Activated CD4-positive, alpha-beta T cell treated with anti-CD3 and anti-CD28 coated beads for 36 hours (primary cell): ENCODE measurements at regions of chr9 and their contacts with region 1.

Region 1: DNA sequence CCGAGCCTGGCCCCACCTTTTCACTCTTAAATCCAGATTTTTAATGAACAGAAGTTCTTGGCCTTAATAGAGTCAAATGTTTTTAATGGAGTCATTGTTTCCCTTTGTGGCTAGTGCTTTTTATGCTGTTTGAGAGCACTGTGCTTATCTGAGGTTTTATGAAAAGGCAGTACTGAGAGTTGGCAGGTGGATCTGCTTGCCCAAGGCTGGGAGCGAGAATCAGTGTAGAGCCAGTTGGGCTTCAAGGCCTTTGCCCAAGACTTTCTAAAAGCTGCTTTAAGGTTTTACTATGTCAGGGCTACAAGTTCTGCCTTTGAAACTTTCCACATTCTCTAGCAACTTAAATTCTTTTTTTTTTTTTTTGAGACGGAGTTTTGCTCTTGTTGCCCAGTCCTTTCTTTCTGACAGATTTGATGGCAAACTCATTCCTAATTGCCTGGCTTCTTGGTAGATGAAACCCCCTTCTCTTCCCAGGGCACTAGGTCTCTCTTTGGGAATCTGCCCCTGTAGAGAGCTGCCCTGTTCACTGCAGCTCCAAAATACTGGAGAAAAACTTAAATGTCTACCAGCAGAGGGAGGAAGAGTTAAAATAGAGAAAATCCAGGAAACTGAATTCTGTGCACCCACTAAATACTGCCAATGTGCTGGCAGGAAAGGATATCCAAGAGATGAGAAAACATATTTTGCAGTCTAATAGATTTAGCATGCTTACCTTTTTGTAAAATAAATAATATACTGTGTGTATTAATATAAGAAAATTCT is 36.9 kb upstream of the CDK20 start:
- DNase-seq: no peak
- ATAC-seq: no peak
- H3K4me3 Mint-ChIP-seq: no peak overlapping the region
- H3K27ac Mint-ChIP-seq: no peak overlapping the region
- H3K4me1 Mint-ChIP-seq: peaks cover 14% of the 10 kb centered on the region
- H3K27me3 Mint-ChIP-seq: peaks cover 5% of the 10 kb centered on the region

Region 2: GRCh38 chr9:87707805-87708506 is 303.2 kb before region 1 on chr9:
- CTCF ChIA-PET with region 1: no interaction called
- POLR2A ChIA-PET with region 1: no interaction called
- intact Hi-C with region 1: loop called in 1 of 2 experiments (anchors 5 kb)
- DNase-seq: peak; percentile 31
- ATAC-seq: peak; percentile 40
- H3K4me3 Mint-ChIP-seq: no peak overlapping the region
- H3K27ac Mint-ChIP-seq: no peak overlapping the region
- H3K4me1 Mint-ChIP-seq: peaks cover 44% of the 10 kb centered on the region
- H3K27me3 Mint-ChIP-seq: peaks cover 5% of the 10 kb centered on the region

Region 3: DNA sequence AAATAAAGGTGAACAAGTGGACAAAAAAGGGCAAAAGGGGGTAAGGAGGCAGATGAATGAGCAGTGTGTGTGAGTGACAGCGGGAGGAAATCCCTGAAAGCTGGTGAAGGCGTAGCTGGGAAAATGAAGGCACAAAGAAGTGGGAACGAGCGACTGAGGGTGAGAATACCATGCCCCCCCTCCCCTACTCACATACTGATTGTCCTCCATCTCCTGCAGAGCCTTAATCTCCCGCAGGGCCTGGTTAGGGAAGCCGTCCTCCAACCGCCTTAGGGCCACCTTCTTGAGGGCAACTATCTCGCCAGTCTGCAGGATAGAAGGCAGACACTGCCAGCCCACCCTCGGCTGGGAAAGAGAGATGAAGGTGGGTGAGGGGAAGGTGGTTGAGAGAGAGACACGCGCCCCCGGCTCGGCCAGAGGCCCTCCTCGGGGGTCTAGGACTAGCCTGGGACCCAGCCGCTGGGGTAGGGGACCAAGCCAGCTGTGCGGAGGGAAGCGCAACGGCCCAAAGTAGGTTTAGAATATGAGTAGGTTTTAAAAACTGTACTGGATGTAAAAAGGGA is 37.4 kb before region 1 on chr9:
- CTCF ChIA-PET with region 1: no interaction called
- POLR2A ChIA-PET with region 1: no interaction called
- intact Hi-C with region 1: loop called (anchors 1 to 2 kb)
- DNase-seq: peak; percentile 19
- ATAC-seq: no peak
- H3K4me3 Mint-ChIP-seq: peak overlapping the region; percentile 82
- H3K27ac Mint-ChIP-seq: peak overlapping the region; percentile 58
- H3K4me1 Mint-ChIP-seq: peaks cover 22% of the 10 kb centered on the region
- H3K27me3 Mint-ChIP-seq: no peaks in the 10 kb centered on the region

Region 4: DNA sequence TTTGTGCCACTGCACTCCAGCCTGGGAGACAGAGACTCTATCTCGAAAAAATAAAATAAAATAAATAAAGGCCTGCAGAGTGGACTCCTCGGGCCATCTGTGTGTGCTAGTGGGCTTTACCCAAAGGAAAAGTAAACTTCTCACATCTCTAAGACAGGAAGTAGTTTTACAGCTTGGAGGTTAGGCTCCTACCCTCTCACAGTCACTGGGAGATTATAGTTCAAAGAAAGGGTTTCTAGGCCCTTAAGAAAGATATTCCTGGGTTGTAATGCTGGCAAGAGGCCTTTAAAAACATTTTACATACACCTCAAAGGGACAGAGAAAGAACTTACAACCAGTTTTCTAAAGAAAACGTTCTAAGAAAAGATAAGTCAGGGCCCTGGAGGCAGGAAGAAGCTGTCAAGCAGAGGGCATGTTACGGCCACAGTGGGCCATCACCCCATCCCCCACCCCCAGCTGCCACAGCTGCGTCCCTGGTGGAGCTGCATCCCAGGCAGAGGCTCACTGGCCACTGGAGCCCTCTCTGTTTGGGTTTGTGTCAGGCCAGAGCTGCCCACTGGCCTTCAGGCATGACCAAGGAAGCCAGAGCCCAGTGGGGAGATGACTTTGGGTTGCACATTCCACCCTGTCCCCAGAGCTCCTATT is 41.3 kb after region 1 on chr9:
- CTCF ChIA-PET with region 1: no interaction called
- POLR2A ChIA-PET with region 1: interaction called, 3 read pairs
- intact Hi-C with region 1: loop called in 1 of 2 experiments (anchors 1 kb)
- DNase-seq: no peak
- ATAC-seq: no peak
- H3K4me3 Mint-ChIP-seq: no peak overlapping the region
- H3K27ac Mint-ChIP-seq: no peak overlapping the region
- H3K4me1 Mint-ChIP-seq: peaks cover 15% of the 10 kb centered on the region
- H3K27me3 Mint-ChIP-seq: peaks cover 12% of the 10 kb centered on the region

Region 5: GRCh38 chr9:88303721-88304451 is 292.7 kb after region 1 on chr9:
- CTCF ChIA-PET with region 1: no interaction called
- POLR2A ChIA-PET with region 1: interaction called, 3 read pairs
- intact Hi-C with region 1: loop called in 1 of 2 experiments (anchors 5 kb)
- DNase-seq: peak; percentile 81
- ATAC-seq: peak; percentile 91
- H3K4me3 Mint-ChIP-seq: no peak overlapping the region
- H3K27ac Mint-ChIP-seq: peak overlapping the region; percentile 68
- H3K4me1 Mint-ChIP-seq: peaks cover 27% of the 10 kb centered on the region
- H3K27me3 Mint-ChIP-seq: peaks cover 18% of the 10 kb centered on the region

Region 6: GRCh38 chr9:88835038-88835466 is 823.9 kb after region 1 on chr9:
- CTCF ChIA-PET with region 1: no interaction called
- POLR2A ChIA-PET with region 1: no interaction called
- intact Hi-C with region 1: loop called in 1 of 2 experiments (anchors 2 kb)
- DNase-seq: no peak
- ATAC-seq: peak; percentile 93
- H3K4me3 Mint-ChIP-seq: no peak overlapping the region
- H3K27ac Mint-ChIP-seq: no peak overlapping the region
- H3K4me1 Mint-ChIP-seq: peaks cover 21% of the 10 kb centered on the region
- H3K27me3 Mint-ChIP-seq: peaks cover 63% of the 10 kb centered on the region